ENCODE measurements at regions of chr16 and their contacts with region 1.

Region 1: DNA sequence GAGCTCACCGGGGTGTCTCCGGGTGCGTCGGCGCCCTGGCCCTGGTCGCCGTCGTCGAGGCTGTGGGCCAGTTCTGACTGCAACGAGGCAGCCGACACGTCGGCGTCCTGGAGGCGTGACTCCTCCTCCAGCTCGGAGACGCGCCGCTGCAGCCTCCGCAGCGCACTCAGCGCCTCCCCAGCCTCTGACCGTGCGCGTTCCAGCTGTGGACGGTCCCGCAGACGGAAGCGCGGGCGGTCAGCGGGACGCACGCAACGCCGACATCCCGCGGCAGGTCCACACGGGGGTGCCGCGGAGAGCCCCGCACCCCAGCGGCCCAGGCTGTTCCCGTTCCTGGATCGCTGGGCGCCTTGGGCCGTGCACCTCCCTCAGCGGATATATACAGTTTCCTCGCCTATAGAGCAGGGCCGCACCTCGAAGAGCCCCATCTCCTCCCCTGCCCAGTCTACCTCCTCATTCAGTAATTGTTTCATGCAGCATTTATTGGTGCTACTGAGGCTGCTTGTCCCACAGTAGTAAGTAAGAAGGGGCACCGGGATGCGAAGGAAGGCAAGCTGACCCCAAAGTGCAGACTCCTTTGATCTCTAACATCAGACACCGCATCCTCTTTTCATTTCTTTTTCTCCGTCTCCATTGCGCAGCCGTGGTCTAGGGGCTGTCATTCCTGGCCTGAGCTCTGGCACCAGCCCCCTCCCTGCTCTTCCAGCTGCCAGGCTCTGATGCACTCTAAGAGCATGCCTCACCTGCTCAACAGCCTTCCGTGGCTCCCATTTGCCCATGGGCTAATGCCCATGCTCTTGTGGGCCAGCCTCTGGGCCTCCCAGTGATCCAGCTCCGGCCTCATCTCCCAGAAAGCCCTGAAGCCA is 5.9 kb downstream of the THOC6 start:
- DNase-seq: no peak
- H3K4me3 ChIP-seq: no peak overlapping the region
- H3K27ac ChIP-seq: no peak overlapping the region
- H3K4me1 ChIP-seq: peaks cover 30% of the 10 kb centered on the region
- H3K27me3 ChIP-seq: no peaks in the 10 kb centered on the region
- CTCF ChIP-seq: no peak

Region 2: DNA sequence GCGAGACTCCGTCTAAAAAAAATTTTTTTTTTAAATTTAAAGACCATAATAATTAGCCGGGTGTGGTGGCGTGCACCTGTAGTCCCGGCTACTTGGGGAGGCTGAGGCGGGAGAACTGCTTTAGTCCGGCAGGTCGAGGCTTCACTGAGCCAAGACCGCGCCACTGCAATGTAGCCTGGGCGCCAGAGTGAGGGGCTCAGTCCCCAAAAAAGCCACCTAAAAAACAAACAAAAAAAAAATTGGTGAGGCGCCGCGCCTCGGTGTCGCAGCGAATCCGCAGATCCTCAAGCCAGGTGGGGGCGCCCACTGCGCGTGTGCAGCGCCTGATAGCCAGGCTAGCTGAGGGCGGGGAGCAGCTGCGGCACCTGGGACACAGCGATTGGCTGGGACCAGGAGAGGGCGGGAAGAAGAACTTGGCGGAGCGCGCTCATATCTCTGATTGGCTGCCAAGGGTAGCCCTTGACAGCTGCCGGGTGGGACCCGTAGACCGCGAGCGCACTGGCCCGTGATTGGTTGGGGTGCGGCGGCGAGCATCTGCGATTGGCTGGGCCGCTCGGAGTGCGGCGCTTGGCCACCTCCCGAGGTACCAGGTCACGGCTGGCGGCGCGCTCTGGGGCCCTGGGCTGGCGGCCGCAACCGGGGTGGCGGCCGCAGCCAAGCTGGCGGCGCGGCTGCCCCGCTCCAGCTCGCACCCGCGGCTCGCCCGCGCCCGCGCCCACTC is 26.0 kb before region 1 on chr16:
- CTCF ChIA-PET with region 1: interaction called, 15 read pairs
- POLR2A ChIA-PET with region 1: interaction called, 9 read pairs
- intact Hi-C with region 1: loop called (anchors 1 kb)
- DNase-seq: peak; percentile 96 to 100
- H3K4me3 ChIP-seq: no peak overlapping the region; the same call in 1 of the 2 replicates
- H3K27ac ChIP-seq: no peak overlapping the region
- H3K4me1 ChIP-seq: peaks cover 33% of the 10 kb centered on the region
- H3K27me3 ChIP-seq: no peaks in the 10 kb centered on the region
- CTCF ChIP-seq: peak; percentile 61

Region 3: GRCh38 chr16:3045357-3045728 is 15.6 kb after region 1 on chr16:
- CTCF ChIA-PET with region 1: interaction called, 12 read pairs
- POLR2A ChIA-PET with region 1: no interaction called
- intact Hi-C with region 1: no loop called
- DNase-seq: no peak
- H3K4me3 ChIP-seq: peak overlapping the region; percentile 92; the same call in 1 of the 2 replicates
- H3K27ac ChIP-seq: no peak overlapping the region
- H3K4me1 ChIP-seq: peaks cover 8% of the 10 kb centered on the region; the same call in 1 of the 2 replicates
- H3K27me3 ChIP-seq: no peaks in the 10 kb centered on the region
- CTCF ChIP-seq: no peak

Region 4: GRCh38 chr16:3207086-3207953 is 177.6 kb after region 1 on chr16:
- CTCF ChIA-PET with region 1: no interaction called
- POLR2A ChIA-PET with region 1: interaction called, 17 read pairs
- intact Hi-C with region 1: no loop called
- DNase-seq: no peak
- H3K4me3 ChIP-seq: no peak overlapping the region
- H3K27ac ChIP-seq: no peak overlapping the region
- H3K4me1 ChIP-seq: no peaks in the 10 kb centered on the region
- H3K27me3 ChIP-seq: no peaks in the 10 kb centered on the region
- CTCF ChIP-seq: no peak

Region 5: GRCh38 chr16:4241258-4241927 is 1211.6 kb after region 1 on chr16:
- CTCF ChIA-PET with region 1: no interaction called
- POLR2A ChIA-PET with region 1: interaction called, 15 read pairs
- intact Hi-C with region 1: no loop called
- DNase-seq: peak in 1 of 2 experiments; percentile 3
- H3K4me3 ChIP-seq: no peak overlapping the region
- H3K27ac ChIP-seq: no peak overlapping the region
- H3K4me1 ChIP-seq: no peaks in the 10 kb centered on the region
- H3K27me3 ChIP-seq: no peaks in the 10 kb centered on the region
- CTCF ChIP-seq: no peak